Left ventricle myocardium inferior (tissue), 1 donor: ENCODE measurements at regions of chr2 and their contacts with region 1.

Region 1: GRCh38 chr2:197399887-197400540 is 34.8 kb downstream of the SF3B1 start:
- DNase-seq: no peak
- H3K4me3 ChIP-seq: no peak overlapping the region
- H3K27ac ChIP-seq: no peak overlapping the region
- H3K4me1 ChIP-seq: no peaks in the 10 kb centered on the region
- H3K27me3 ChIP-seq: no peaks in the 10 kb centered on the region
- CTCF ChIP-seq: no peak

Region 2: DNA sequence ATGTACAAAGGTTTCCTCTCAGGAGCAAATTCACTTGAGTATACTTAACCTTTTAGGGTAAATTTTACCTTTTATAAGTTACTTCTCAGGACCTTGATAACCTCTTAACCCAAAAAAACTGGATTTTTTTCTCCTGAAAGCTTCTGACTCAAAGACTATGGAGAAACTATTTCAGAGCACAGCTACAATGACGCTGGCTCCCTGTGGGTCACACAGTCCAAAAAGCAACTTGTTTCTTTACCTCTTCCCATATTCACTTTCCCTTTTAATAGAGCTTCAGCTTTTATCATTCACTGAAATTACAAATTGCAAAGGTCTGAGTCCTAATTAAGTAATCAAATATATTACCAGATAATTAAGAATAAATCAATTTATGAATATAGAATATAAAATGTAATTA is 632.9 kb before region 1 on chr2:
- intact Hi-C with region 1: loop called (anchors 10 kb)
- DNase-seq: no peak
- H3K4me3 ChIP-seq: no peak overlapping the region
- H3K27ac ChIP-seq: no peak overlapping the region
- H3K4me1 ChIP-seq: no peaks in the 10 kb centered on the region
- H3K27me3 ChIP-seq: no peaks in the 10 kb centered on the region
- CTCF ChIP-seq: no peak

Region 3: DNA sequence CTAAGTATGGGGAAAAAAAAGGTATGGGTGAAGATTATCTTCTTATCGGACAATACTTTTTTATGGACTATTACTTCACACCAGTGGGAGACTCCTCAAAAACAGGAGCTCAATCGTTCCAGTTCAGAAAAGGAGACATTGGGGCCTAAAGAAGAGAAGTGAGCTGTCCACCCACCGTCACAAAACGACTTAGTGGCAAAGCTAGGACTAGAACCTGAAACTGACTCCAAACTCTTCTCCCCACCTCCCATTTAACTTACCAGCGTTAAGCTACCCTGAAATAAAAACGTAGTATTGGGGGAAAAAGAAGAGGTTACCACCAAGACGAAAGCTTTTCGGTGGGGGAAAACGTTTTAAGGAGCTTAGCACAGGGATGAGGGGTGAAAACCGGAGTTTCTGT is 601.0 kb before region 1 on chr2:
- intact Hi-C with region 1: loop called (anchors 10 kb)
- DNase-seq: no peak
- H3K4me3 ChIP-seq: peak overlapping the region; percentile 80
- H3K27ac ChIP-seq: peak overlapping the region; percentile 77
- H3K4me1 ChIP-seq: peaks cover 45% of the 10 kb centered on the region
- H3K27me3 ChIP-seq: peaks cover 17% of the 10 kb centered on the region
- CTCF ChIP-seq: no peak

Region 4: GRCh38 chr2:197416268-197416667 is 16.3 kb after region 1 on chr2:
- intact Hi-C with region 1: no loop called
- DNase-seq: no peak
- H3K4me3 ChIP-seq: no peak overlapping the region
- H3K27ac ChIP-seq: no peak overlapping the region
- H3K4me1 ChIP-seq: peaks cover 19% of the 10 kb centered on the region
- H3K27me3 ChIP-seq: no peaks in the 10 kb centered on the region
- CTCF ChIP-seq: no peak

Region 5: DNA sequence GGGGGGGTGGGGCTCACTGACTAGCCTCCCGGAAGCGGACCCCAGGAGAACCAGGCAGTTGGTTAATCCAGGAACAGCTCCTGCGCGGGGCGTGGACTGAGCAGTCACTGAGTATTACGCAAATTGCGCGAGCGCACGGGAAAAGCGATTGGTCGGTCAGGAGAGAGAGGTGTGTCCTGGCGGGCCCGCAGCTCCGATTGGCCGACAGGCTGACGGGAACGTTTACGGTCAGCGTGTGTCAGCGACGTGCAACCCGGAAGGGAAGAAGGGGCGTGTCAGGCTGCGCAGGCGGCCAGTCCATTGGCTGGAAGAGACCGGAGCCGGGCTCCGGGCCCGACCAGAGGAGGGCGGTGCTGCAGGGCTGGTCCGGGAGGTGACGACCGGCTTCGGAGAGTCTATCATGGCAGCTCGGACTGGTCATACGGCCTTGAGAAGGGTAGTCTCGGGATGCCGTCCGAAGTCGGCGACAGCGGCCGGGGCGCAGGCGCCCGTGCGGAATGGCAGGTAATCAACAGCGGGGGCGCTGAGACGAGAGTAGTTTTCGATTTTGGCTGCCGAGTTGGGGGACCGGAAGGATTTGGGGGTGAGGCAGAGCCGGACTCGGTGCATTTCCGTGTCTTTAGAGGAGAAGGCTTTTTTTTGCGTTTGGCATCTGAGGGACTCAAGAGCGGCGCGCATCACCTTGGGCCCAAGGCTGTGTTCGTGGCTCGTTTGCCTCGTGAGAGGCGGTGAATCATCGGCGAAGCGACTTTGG is 53.3 kb after region 1 on chr2 and contains the start of gene COQ10B:
- intact Hi-C with region 1: no loop called
- DNase-seq: peak; percentile 99
- H3K4me3 ChIP-seq: peak within 1 kb of the TSS; percentile 90
- H3K27ac ChIP-seq: peak within 1 kb of the TSS; percentile 99
- H3K4me1 ChIP-seq: peaks cover 43% of the 10 kb centered on the region
- H3K27me3 ChIP-seq: no peaks in the 10 kb centered on the region
- CTCF ChIP-seq: peak; percentile 54
- total RNA-seq, gene COQ10B: 28.2 TPM

Region 6: GRCh38 chr2:197499594-197500526 is 99.8 kb after region 1 on chr2 and contains the starts of genes HSPD1 and HSPE1:
- intact Hi-C with region 1: loop called (anchors 10 kb)
- DNase-seq: peak; percentile 97
- H3K4me3 ChIP-seq: peak within 1 kb of the TSS; percentile 91
- H3K27ac ChIP-seq: peak within 1 kb of the TSS; percentile 92
- H3K4me1 ChIP-seq: peaks cover 76% of the 10 kb centered on the region
- H3K27me3 ChIP-seq: no peaks in the 10 kb centered on the region
- CTCF ChIP-seq: no peak
- total RNA-seq, gene HSPD1: 143 TPM
- total RNA-seq, gene HSPE1: 120 TPM